Uterus (tissue), 4 donors: ENCODE measurements at regions of chr2 and their contacts with region 1.

Region 1: DNA sequence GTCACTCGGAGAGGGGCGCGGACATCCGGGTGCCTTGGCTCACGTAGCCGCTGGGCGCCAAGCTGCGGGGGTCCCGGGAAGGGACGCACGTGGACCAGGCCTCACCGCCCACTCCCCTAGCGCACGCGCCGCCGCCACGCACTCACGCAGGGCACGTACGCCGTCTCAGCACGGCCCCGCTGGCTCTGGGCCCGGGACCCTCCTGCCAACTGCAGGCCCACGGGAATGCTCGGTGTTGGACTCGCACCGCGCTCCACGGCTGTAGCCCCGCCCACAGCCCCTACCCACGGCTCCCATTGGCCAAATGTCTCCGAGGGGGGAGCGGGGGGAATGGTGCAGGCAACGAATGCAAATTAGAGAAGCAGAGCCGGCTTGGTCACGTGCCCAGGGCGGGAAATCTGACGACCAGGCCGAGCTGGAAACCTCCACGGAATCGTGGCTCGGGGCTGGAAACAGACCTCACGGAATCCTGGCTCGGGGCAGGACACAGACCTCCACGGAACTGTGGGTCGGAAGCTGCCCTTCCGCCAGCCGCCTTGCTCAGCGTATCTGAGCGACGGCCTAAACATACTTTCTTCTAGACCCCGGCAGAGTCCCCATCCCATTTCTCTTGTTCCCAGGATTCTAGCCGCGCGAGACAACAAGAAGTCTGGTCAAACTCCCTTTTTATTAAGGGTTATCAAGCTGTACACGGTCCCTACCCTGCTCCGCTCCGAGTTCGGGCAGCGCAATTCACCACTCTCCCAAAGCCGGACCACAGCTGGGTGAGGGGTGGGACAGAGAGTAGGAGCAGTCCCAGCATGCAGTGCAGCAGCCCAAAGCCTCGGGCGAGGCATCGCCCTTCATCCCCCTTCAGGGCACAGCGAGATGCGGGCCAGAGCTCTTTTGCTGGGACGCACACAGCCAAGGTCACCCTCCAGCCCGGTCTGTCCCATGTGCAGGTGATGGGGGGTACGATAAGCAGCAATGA is at the start of gene ABCB6:
- DNase-seq: peak; percentile 98 to 99
- H3K4me3 ChIP-seq: peak within 1 kb of the TSS; percentile 29 to 43
- H3K27ac ChIP-seq: peak within 1 kb of the TSS; percentile 61 to 82
- H3K4me1 ChIP-seq: peaks cover 0 to 11% of the 10 kb centered on the region in 2 donors
- H3K27me3 ChIP-seq: no peaks in the 10 kb centered on the region
- CTCF ChIP-seq: peak in 1 of 4 experiments; percentile 25
- POLR2A ChIP-seq: peak; percentile 62 to 63
- total RNA-seq, gene ABCB6: 7.1 to 37.6 (median 27.7) TPM

Region 2: GRCh38 chr2:219182331-219183150 is 36.5 kb before region 1 on chr2:
- intact Hi-C with region 1: loop called (anchors 5 kb)
- DNase-seq: no peak
- H3K4me3 ChIP-seq: no peak overlapping the region
- H3K27ac ChIP-seq: no peak overlapping the region
- H3K4me1 ChIP-seq: peaks cover 0 to 7% of the 10 kb centered on the region in 2 donors
- H3K27me3 ChIP-seq: no peaks in the 10 kb centered on the region
- CTCF ChIP-seq: no peak
- POLR2A ChIP-seq: no peak

Region 3: DNA sequence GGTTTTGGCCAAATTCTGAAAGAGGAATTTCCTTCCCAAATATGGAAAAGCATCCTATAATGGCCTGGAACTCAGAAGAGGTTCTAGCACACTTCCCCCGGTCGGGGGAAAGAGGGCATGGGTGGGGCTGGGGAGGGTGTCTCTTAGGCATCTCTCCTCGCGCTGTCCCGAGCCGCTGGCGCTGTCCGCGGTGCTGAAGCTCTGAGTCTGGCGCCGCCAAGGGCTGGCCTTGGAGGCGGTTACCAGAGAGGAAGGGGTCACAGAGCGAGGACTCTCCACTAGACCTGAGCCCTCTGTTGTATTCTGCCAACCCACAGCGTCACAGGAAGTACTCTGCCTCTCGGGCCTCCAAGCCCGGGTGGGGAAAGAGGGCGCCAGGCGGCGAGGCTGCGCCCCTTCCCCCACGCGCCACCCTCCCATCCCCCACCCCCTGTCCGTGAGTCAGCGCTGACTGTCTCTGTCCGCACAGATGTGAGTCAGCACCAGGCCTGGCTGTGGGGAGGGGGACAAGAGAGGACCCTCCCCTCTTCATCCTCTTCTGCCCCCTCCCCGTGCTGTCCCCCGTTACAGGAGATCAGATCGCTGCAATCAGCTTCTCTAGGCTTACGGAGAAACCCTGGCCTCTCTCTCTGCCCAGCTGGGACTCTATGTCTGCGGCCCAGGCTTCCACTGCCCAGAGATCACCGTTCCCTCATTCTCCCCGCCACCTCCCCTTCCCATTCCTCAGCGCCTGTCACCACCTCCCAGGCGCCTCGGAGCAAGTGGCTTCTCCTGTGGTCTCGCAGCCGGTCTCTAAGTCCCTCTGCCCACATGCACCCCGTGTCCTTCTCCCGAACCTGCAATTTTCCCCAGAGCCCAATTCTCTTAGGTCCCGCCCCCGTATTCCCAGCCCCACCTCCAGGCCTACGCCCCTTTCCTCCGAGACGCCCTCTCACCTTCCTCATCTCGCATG is 89.4 kb after region 1 on chr2:
- intact Hi-C with region 1: no loop called
- DNase-seq: no peak
- H3K4me3 ChIP-seq: no peak overlapping the region
- H3K27ac ChIP-seq: no peak overlapping the region
- H3K4me1 ChIP-seq: no peaks in the 10 kb centered on the region
- H3K27me3 ChIP-seq: peaks cover 0 to 22% of the 10 kb centered on the region in 2 donors
- CTCF ChIP-seq: no peak
- POLR2A ChIP-seq: no peak

Region 4: GRCh38 chr2:220104871-220105351 is 885.9 kb after region 1 on chr2:
- intact Hi-C with region 1: no loop called
- DNase-seq: no peak
- H3K4me3 ChIP-seq: no peak overlapping the region
- H3K27ac ChIP-seq: no peak overlapping the region
- H3K4me1 ChIP-seq: no peaks in the 10 kb centered on the region
- H3K27me3 ChIP-seq: no peaks in the 10 kb centered on the region
- CTCF ChIP-seq: no peak
- POLR2A ChIP-seq: no peak